ENCODE measurements at regions of chr13 and their contacts with region 1.

Region 1: DNA sequence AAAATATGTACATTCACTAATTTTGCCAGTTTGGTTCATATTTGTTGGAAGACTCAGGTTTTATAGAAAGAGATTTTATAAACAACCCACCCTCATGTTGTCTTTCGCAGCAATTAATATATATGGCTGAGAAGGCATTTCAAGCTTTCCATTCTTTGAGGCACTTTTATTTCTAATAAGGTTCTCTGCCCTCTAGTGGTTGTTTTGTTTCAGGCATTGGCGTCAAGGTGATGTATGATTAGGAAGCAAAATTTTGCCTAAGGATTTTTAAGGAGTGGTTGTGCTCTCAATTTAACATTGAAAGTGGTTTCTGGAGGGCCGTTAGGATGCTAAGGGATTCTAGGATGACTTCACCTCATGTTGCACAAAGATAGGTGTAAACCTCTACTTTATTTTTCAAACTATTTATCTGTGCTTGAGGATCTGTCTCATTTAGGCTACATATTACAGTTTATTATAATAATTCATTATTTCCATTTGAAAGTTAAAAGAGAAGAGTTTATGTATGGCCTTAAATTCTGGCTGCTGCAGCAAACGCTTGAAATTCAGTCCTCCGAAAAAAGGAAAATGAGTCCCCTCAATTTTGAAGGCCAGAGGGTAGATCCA is 35.9 kb downstream of the OXGR1 start:
- DNase-seq: peak; percentile 30
- H3K4me3 ChIP-seq: peak overlapping the region in 1 of 2 experiments; percentile 34; a peak in 1 of 4 replicates
- H3K27ac ChIP-seq: no peak overlapping the region
- H3K4me1 ChIP-seq: no peaks in the 10 kb centered on the region
- H3K27me3 ChIP-seq: no peaks in the 10 kb centered on the region
- CTCF ChIP-seq: peak; percentile 84
- EP300 ChIP-seq: no peak
- RAD21 ChIP-seq: peak; percentile 66

Region 2: GRCh38 chr13:96940961-96941360 is 17.4 kb before region 1 on chr13:
- CTCF ChIA-PET with region 1: interaction called, 39 read pairs
- POLR2A ChIA-PET with region 1: no interaction called
- DNase-seq: no peak
- H3K4me3 ChIP-seq: no peak overlapping the region
- H3K27ac ChIP-seq: no peak overlapping the region
- H3K4me1 ChIP-seq: no peaks in the 10 kb centered on the region
- H3K27me3 ChIP-seq: no peaks in the 10 kb centered on the region
- CTCF ChIP-seq: no peak
- EP300 ChIP-seq: no peak
- RAD21 ChIP-seq: no peak

Region 3: DNA sequence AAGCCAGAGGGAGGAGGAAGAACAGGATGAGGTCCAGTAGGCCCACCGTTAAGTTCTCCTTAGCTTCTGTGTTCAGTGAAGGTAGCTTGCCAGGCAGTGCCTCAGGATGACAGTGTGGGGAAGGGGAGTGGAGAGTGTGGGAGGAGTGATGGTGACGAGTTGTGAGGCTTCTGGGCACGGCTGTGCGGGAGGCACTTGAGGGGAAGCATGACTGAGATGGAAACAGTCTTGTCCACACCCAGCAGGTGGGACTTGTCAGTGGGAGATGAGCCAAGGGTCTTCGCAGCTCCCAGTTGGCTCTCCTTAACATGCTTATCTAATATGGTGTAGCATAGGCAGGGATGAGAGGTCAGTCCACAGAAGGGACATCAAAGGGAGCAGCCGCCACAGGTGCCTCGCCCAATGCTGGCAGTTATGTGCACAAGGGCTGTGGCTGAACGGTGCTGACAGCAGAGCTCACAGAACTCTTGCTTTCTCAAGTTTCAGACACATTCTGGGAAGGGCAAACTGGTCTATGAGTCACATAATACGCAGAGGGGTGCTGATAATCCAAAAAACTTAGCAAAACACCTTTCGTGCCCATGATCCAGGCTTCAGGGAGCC is 11.6 kb before region 1 on chr13:
- CTCF ChIA-PET with region 1: interaction called, 39 read pairs
- POLR2A ChIA-PET with region 1: no interaction called
- DNase-seq: no peak
- H3K4me3 ChIP-seq: no peak overlapping the region
- H3K27ac ChIP-seq: no peak overlapping the region
- H3K4me1 ChIP-seq: no peaks in the 10 kb centered on the region
- H3K27me3 ChIP-seq: no peaks in the 10 kb centered on the region
- CTCF ChIP-seq: no peak
- EP300 ChIP-seq: no peak
- RAD21 ChIP-seq: no peak

Measured in SK-N-SH (cell line).